Left ventricle myocardium inferior (tissue), 1 donor: ENCODE measurements at regions of chr4 and their contacts with region 1.

Region 1: GRCh38 chr4:13445841-13446790 is 38.0 kb downstream of the RAB28 start:
- DNase-seq: peak; percentile 10
- H3K4me3 ChIP-seq: no peak overlapping the region
- H3K27ac ChIP-seq: no peak overlapping the region
- H3K4me1 ChIP-seq: peaks cover 8% of the 10 kb centered on the region
- H3K27me3 ChIP-seq: no peaks in the 10 kb centered on the region
- CTCF ChIP-seq: no peak

Region 2: GRCh38 chr4:12712648-12713339 is 733.3 kb before region 1 on chr4:
- intact Hi-C with region 1: no loop called
- DNase-seq: no peak
- H3K4me3 ChIP-seq: no peak overlapping the region
- H3K27ac ChIP-seq: no peak overlapping the region
- H3K4me1 ChIP-seq: no peaks in the 10 kb centered on the region
- H3K27me3 ChIP-seq: no peaks in the 10 kb centered on the region
- CTCF ChIP-seq: no peak

Region 3: DNA sequence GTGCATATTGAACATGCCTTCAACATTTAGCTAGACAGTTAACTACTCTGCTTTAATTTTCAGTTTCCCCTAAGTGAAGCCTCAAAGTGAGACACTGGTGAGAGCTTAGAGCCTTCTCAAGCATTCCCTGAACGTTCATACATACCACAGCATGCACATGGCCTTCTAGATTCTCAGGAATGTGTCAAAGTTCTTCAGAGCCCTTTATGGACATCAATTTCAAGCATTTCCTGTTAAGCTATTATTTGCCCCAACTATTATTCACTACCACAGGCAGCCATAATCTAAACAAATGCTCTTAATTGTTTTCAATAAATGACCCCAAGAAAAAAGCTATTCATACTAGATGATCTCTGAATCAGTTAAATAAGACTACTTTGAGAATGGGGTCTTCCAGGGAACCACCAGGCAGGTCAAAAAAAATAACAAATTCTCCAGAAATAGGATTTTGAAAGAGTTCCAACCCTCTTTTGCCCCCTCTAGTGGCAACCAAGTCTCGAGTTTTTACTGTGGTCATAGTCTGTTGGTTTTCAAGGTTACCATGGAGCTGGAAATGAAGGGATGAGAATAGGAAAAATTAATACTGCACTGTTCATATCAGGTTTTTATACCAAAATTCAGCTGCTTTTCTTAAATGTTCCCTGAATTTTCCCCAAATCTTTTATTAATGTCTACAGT is 197.4 kb before region 1 on chr4:
- intact Hi-C with region 1: loop called (anchors 5 kb)
- DNase-seq: no peak
- H3K4me3 ChIP-seq: no peak overlapping the region
- H3K27ac ChIP-seq: no peak overlapping the region
- H3K4me1 ChIP-seq: no peaks in the 10 kb centered on the region
- H3K27me3 ChIP-seq: no peaks in the 10 kb centered on the region
- CTCF ChIP-seq: peak; percentile 27